Activated CD4-positive, alpha-beta memory T cell treated with anti-CD3 and anti-CD28 coated beads, Interleukin-2, amount 10 ng/mL, durations not matched to agents 7 days and 5 days (primary cell): ENCODE measurements at regions of chr2 and their contacts with region 1.

Region 1: DNA sequence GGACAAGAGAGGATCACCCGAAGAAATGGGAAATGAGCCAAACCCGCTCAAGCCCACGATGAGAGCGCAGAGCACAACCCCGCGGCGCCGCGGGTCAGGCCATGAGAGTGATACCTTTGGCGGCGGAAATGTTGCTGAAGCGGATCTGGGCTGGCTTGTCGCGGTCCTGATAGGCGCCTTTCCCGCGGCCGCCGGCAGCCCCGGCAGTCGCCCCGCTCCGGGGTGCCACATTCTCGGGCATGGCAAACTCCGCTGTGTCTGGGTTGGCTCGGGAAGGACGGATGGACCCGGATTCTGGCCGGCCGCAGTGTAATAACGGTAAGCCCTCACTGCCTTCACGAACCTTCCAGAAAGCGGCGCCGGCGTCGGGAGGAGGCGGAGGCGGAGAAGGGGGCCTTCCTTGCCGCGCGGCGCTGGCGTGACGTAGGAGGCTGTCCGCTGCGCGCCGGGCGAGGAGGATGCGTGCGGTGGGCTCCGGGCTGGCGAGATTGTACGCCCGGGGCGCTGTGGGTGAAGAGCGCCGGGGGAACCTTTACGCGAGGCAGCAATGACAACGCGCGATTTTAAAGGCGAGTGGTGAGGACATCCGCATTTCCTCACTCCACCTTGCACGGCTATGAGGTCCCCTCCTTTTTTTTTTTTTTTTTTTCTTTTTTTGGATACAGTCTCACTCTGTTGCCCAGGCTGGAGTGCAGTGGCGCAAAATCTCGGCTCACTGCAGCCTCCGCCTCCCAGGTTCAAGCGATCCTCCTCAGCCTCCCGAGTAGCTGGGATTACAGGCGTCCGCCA is at the start of gene CCT4:
- DNase-seq: peak; percentile 91
- H3K4me3 Mint-ChIP-seq: peak within 1 kb of the TSS; percentile 99
- H3K27ac Mint-ChIP-seq: peak within 1 kb of the TSS; percentile 94
- H3K4me1 Mint-ChIP-seq: peaks cover 32% of the 10 kb centered on the region
- H3K27me3 Mint-ChIP-seq: no peaks in the 10 kb centered on the region
- total RNA-seq, gene CCT4: 145 to 151 TPM

Region 2: GRCh38 chr2:61854474-61855182 is 33.8 kb before region 1 on chr2:
- CTCF ChIA-PET with region 1: no interaction called
- POLR2A ChIA-PET with region 1: interaction called, 13 read pairs
- DNase-seq: peak; percentile 92
- H3K4me3 Mint-ChIP-seq: peak overlapping the region; percentile 86
- H3K27ac Mint-ChIP-seq: peak overlapping the region; percentile 77
- H3K4me1 Mint-ChIP-seq: peaks cover 25% of the 10 kb centered on the region
- H3K27me3 Mint-ChIP-seq: no peaks in the 10 kb centered on the region

Region 3: GRCh38 chr2:62055724-62056336 is 167.4 kb after region 1 on chr2:
- CTCF ChIA-PET with region 1: no interaction called
- POLR2A ChIA-PET with region 1: no interaction called
- DNase-seq: no peak
- H3K4me3 Mint-ChIP-seq: no peak overlapping the region
- H3K27ac Mint-ChIP-seq: no peak overlapping the region
- H3K4me1 Mint-ChIP-seq: peaks cover 14% of the 10 kb centered on the region
- H3K27me3 Mint-ChIP-seq: no peaks in the 10 kb centered on the region